ENCODE measurements at regions of chr10 and their contacts with region 1.

Region 1: DNA sequence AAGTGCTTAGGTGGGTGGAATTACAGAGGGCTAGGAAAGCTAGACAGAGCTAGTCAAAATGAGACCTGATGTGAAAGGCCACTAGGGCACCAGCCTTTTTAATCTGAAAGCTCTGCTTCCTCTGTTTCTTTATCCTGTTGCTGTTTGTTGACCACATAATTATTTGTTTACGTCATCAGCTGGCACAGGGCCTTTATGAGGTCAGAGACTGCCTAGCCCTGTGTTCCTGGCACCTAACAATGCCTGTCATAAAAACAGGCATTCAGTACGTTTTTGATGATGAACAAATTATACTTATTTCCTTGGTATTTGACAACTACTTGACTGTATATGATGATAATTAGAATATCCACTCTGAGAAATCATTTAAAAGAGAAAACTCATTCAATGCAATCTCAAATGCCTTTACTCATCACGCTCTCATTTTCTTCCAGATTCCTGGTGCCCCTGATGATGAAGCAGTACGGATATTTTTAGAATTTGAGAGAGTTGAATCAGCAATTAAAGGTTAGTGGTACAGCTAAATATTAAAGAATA is 26.0 kb downstream of the RBM17 start:
- DNase-seq: peak in 1 of 2 donors; percentile 57
- H3K4me3 ChIP-seq: no peak overlapping the region
- H3K27ac ChIP-seq: peak overlapping the region; percentile 39 to 40
- H3K4me1 ChIP-seq: no peaks in the 10 kb centered on the region
- H3K27me3 ChIP-seq: no peaks in the 10 kb centered on the region
- CTCF ChIP-seq: no peak
- POLR2A ChIP-seq: no peak

Region 2: DNA sequence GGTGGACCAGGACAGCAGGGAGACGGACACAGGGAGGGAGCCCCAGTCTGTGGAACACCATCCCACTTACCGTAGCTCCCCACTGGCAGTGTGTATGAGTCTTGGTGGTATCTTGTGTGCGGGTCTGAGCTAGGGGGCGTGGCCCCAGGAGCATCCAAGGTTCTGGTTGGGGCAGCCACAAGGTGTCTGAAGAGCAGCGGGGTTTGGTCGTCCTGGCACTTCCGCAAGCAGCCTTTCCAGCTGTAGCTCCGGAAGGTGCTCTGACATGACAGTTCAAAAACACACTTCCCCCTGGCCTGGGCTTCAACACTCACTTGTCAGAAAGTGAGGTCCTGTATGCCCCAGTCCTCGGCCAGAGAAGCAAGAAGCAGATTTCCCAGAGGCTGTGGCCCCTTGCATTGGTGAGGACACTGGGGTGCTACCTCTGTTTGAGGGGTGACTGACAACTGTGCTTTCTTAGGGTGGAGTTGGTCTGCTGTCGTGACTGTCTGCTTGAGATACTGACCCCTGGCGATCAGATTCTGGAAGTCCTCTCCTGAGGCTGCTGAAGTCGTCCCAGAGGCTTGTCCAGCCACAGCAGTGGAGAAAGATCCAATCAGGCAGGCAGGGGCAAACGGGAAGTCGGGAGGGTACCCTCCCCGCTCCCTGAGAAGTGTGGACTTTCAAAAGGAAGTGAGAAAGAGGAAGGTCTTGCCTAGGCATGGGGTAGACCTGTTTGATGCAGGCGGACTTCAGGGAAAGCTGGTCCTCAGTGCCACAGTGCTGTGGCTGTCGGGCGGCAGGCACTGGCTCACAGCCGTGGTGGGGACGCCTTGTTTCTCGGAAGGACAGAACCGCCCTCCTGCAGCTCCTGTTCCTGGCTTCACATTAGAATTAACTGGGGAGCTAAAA is 36.5 kb after region 1 on chr10:
- intact Hi-C with region 1: loop called (anchors 5 kb)
- DNase-seq: peak; percentile 51 to 52
- H3K4me3 ChIP-seq: no peak overlapping the region
- H3K27ac ChIP-seq: no peak overlapping the region
- H3K4me1 ChIP-seq: peaks cover 0 to 2% of the 10 kb centered on the region in 2 donors
- H3K27me3 ChIP-seq: no peaks in the 10 kb centered on the region
- CTCF ChIP-seq: peak; percentile 42 to 60 (median 56)
- POLR2A ChIP-seq: no peak

Measured in uterus (tissue), 4 donors.